Activated CD4-positive, alpha-beta memory T cell treated with anti-CD3 and anti-CD28 coated beads for 36 hours (primary cell): ENCODE measurements at regions of chr16 and their contacts with region 1.

Region 1: DNA sequence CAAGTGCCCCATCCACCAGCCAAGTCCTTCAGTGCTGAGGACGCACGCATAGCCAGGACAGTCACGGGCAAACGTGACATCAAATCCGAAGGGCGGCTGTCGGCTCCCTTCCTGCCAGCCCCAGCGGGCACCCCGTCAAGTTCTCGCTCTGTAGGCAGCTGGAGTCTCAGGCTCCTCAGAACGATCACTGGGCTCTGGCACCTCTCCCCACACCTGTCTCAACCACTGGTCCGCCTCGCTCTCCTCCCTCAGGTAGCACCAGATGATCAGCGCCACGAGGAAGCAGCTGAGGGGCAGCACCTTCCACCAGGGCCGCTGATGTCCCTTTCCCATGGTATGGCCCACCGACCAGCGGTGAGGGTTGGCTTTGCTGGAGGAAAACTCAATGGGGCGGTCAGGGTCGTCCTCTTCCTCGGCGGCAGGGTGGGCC is 421 bp downstream of the UQCC4 start:
- DNase-seq: peak; percentile 28
- H3K4me3 Mint-ChIP-seq: peak overlapping the region; percentile 87
- H3K27ac Mint-ChIP-seq: peak overlapping the region; percentile 64
- H3K4me1 Mint-ChIP-seq: peaks cover 27% of the 10 kb centered on the region
- H3K27me3 Mint-ChIP-seq: no peaks in the 10 kb centered on the region

Region 2: DNA sequence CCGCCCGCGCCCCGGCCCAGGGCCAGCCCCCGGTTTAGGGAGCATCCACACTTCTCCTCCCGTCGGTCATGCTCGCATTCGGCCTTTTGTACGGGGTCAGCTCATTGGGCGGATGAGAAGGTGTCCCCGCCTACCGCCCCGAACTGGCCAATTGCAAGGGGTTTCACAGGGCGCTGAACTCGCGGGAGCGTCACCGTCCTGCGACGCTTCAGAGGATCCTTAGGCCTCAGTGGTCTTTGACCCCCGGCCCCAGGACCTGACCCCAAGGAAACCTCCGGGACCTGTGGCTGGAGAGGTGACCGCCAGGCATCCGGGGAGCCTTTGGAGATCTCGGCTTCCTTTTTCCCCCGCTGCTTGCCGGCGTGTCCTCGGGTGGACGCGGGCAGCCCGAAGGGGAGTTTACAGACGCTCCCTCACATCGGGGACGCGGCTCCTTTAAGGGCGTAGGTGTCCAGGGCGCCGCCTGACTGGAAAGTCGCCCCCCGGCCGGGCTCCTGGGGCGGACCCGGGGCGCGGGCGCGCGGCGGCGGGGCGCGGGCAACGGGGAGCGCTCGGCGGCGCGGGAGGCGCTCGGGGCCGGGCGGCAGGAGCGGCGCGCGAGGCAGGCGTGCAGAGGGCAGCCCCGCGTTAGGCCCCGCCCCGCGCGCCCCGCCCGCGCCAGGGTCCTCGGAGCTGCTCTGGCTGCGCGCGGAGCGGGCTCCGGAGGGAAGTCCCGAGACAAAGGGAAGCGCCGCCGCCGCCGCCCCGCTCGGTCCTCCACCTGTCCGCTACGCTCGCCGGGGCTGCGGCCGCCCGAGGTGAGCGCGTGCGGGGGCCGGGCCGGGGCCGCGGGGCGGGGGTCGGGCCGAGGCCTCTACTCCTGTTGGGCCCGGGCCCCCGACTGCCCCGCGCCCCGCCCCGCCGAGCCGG is 110.9 kb before region 1 on chr16 and contains the start of gene UBE2I:
- CTCF ChIA-PET with region 1: no interaction called
- POLR2A ChIA-PET with region 1: interaction called, 3 read pairs
- intact Hi-C with region 1: loop called (anchors 2 kb)
- DNase-seq: peak; percentile 98
- H3K4me3 Mint-ChIP-seq: peak within 1 kb of the TSS; percentile 98
- H3K27ac Mint-ChIP-seq: peak within 1 kb of the TSS; percentile 98
- H3K4me1 Mint-ChIP-seq: peaks cover 37% of the 10 kb centered on the region
- H3K27me3 Mint-ChIP-seq: no peaks in the 10 kb centered on the region
- total RNA-seq, gene UBE2I: 248 to 249 TPM

Region 3: DNA sequence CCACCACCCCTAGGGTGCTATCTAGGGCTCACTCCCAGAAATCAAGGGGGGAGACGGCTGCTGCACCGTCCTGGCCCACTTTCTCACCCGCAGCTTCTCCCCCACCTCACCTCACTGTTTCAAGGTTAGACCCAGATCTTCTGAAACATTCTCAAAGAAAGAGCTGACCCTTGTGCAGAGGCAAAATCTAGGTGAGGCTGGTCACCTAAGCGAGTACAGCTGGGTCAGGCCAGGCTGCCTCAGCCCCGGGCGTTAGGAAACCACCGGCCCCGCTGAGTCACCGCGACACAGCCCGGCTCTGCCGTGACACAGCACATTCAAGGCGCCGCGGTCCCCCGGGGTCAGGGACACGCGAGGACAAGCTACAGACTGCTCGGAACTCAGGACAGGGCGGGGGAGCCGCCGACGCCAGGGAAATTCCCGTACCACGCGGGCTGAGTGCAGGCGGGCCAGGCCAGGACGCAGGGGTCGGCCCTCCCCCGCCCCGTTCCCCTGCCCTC is 41.3 kb before region 1 on chr16:
- CTCF ChIA-PET with region 1: interaction called, 5 read pairs
- POLR2A ChIA-PET with region 1: interaction called, 4 read pairs
- intact Hi-C with region 1: loop called (anchors 2 kb)
- DNase-seq: peak; percentile 85
- H3K4me3 Mint-ChIP-seq: peak overlapping the region; percentile 87
- H3K27ac Mint-ChIP-seq: peak overlapping the region; percentile 90
- H3K4me1 Mint-ChIP-seq: peaks cover 20% of the 10 kb centered on the region
- H3K27me3 Mint-ChIP-seq: no peaks in the 10 kb centered on the region

Region 4: DNA sequence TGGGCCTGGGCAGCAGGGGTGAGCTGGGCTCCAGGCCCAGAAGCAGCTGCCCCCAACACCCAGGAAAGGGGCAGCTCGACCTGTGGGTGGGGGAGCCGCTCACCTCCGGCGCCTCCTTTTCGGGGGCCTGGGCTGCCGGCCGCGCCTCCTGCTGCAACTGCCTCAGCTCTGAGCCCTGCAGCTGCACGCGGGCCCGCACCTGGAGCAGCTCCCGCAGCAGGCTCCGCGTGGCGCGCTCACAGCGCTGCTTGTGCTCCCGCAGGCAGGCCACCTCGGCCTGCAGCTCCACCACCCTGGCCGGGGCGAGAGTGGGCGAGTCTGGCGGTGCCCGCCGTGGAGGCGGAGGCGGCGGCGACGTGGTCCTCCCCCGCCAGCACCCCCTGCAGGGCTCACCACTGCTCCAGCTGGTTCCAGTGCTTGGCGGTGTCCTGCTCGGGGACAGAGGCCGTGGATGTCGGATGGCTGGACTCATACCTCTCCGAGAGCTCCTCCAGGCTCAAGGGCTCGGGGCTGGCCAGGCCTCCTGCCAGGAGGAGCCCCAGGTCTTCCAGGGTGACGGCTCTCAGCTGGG is 23.4 kb after region 1 on chr16:
- CTCF ChIA-PET with region 1: no interaction called
- POLR2A ChIA-PET with region 1: no interaction called
- intact Hi-C with region 1: no loop called
- DNase-seq: no peak
- H3K4me3 Mint-ChIP-seq: no peak overlapping the region
- H3K27ac Mint-ChIP-seq: no peak overlapping the region
- H3K4me1 Mint-ChIP-seq: no peaks in the 10 kb centered on the region
- H3K27me3 Mint-ChIP-seq: no peaks in the 10 kb centered on the region

Region 5: DNA sequence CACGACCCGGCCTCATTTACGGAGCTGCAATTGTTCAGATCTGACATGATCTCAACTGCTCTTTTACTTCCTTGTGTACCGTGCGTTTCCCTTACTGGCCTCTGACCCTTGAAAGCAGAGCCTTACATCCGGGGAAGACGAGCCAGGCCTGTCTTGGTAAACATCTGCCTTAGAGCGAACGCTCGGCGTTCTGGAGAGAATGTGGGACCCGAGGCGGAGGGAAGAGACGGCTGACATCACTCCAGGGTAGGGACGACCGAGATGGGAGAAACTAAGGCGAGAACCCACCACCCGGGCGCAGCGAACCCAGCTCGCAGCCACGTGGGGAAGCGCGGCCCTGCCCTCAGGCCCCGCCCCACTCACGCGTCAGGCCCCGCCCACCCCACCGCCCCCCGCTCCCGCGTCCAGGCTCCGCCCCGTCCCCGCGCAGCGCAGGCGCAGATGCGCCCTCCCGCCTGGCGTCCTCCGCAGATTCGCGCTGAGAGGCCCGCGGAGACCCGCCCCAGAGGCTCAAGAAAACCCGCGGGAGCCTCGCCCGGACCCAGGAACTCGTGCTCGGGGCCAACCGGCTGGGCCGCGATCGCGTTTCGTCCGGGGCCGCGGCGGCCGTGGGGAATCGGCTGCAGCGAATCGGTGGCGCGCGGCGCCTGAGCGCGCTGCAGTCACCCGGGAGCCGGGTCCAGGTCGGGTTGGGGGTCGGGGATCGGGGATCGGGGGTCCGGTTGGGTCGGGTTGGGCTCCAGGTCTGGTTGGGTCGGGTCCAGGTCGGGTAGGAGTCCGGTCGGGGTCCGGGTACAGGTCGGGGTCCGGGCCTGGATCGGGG is 73.0 kb after region 1 on chr16 and contains the start of gene TELO2:
- CTCF ChIA-PET with region 1: no interaction called
- POLR2A ChIA-PET with region 1: interaction called, 14 read pairs
- intact Hi-C with region 1: loop called (anchors 1 kb)
- DNase-seq: peak; percentile 90
- H3K4me3 Mint-ChIP-seq: peak within 1 kb of the TSS; percentile 87
- H3K27ac Mint-ChIP-seq: peak within 1 kb of the TSS; percentile 93
- H3K4me1 Mint-ChIP-seq: peaks cover 15% of the 10 kb centered on the region
- H3K27me3 Mint-ChIP-seq: no peaks in the 10 kb centered on the region
- total RNA-seq, gene TELO2: 62.6 to 63.2 TPM

Region 6: GRCh38 chr16:1543085-1543896 is 123.2 kb after region 1 on chr16:
- CTCF ChIA-PET with region 1: no interaction called
- POLR2A ChIA-PET with region 1: no interaction called
- intact Hi-C with region 1: loop called (anchors 5 kb)
- DNase-seq: peak; percentile 84
- H3K4me3 Mint-ChIP-seq: peak overlapping the region; percentile 66
- H3K27ac Mint-ChIP-seq: peak overlapping the region; percentile 95
- H3K4me1 Mint-ChIP-seq: peaks cover 69% of the 10 kb centered on the region
- H3K27me3 Mint-ChIP-seq: no peaks in the 10 kb centered on the region

Region 7: DNA sequence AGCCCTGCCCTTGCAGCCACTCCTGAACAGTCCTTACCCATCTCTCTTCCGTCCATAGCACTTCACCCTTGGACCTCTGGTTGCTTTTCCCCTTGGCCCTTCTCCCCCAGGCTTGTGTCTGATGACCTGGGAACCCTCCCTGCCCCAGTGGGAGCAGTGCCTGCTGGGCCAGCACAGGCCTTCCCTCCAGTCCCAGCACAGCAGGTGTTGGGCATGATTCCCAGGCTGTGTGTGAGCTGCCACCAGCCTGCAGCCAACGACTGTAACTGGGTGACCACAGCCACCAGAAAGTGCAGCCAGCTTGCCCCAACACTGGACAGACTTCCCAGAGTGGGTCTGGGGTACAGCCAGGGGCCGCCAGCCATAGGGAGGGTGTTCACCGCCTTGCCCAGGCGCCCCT is 222.0 kb after region 1 on chr16:
- CTCF ChIA-PET with region 1: no interaction called
- POLR2A ChIA-PET with region 1: no interaction called
- intact Hi-C with region 1: no loop called
- DNase-seq: no peak
- H3K4me3 Mint-ChIP-seq: no peak overlapping the region
- H3K27ac Mint-ChIP-seq: no peak overlapping the region
- H3K4me1 Mint-ChIP-seq: peaks cover 25% of the 10 kb centered on the region
- H3K27me3 Mint-ChIP-seq: no peaks in the 10 kb centered on the region

Region 8: DNA sequence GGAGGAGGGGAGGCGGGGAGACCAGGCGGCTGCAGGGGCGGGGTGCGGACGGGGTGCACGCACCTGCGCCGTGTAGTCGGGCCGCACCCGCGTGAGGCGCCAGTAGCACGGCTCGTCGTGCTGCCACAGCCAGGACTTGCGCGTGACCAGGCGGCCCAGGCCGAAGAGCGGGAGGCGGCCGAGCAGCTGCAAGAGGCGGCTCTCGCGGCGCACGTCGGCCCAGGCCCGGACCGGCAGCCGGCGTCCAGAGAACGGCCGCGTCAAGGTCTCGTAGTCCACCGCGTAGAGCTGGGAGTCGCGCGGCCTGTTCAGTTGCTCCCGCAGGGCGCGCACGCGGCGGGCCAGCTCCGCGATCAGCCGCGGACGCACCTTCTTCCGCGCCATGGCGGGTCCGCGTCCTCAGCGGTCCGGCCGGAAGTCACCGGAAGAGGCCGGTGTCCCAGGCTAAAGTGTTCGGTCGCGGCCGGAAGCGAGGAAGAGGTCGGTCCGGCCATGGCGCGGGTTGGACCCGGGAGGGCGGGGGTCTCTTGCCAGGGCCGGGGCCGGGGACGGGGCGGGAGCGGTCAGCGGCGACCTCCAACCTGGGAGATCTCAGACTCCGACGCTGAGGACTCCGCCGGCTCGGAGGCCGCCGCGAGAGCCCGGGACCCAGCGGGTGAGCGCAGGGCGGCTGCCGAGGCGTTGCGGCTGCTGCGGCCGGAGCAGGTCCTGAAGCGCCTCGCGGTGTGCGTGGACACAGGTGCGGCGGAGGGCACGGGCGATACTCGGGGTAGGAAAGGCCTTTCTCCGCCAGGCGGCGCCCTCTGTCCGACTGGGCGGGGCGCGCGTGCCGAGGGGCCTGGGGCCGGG is 352.8 kb after region 1 on chr16 and contains the starts of genes EME2 and MRPS34:
- CTCF ChIA-PET with region 1: no interaction called
- POLR2A ChIA-PET with region 1: no interaction called
- intact Hi-C with region 1: loop called (anchors 2 kb)
- DNase-seq: peak; percentile 87
- H3K4me3 Mint-ChIP-seq: peak within 1 kb of the TSS; percentile 94
- H3K27ac Mint-ChIP-seq: peak within 1 kb of the TSS; percentile 94
- H3K4me1 Mint-ChIP-seq: peaks cover 6% of the 10 kb centered on the region
- H3K27me3 Mint-ChIP-seq: no peaks in the 10 kb centered on the region
- total RNA-seq, gene EME2: 11.9 to 15.3 TPM
- total RNA-seq, gene MRPS34: 151 to 152 TPM